Activated T-helper 1 cell treated with anti-CD3 and anti-CD28 coated beads, Interleukin-12 subunit alpha, Interleukin-12 subunit beta, Interleukin-2, Interleukin-4 antibody, amounts not matched to agents 30 ng/mL and 10 ng/mL and 1 ng/mL, durations not matched to agents 14 hours and 24 hours and 36 hours (primary cell): ENCODE measurements at regions of chr10 and their contacts with region 1.

Region 1: DNA sequence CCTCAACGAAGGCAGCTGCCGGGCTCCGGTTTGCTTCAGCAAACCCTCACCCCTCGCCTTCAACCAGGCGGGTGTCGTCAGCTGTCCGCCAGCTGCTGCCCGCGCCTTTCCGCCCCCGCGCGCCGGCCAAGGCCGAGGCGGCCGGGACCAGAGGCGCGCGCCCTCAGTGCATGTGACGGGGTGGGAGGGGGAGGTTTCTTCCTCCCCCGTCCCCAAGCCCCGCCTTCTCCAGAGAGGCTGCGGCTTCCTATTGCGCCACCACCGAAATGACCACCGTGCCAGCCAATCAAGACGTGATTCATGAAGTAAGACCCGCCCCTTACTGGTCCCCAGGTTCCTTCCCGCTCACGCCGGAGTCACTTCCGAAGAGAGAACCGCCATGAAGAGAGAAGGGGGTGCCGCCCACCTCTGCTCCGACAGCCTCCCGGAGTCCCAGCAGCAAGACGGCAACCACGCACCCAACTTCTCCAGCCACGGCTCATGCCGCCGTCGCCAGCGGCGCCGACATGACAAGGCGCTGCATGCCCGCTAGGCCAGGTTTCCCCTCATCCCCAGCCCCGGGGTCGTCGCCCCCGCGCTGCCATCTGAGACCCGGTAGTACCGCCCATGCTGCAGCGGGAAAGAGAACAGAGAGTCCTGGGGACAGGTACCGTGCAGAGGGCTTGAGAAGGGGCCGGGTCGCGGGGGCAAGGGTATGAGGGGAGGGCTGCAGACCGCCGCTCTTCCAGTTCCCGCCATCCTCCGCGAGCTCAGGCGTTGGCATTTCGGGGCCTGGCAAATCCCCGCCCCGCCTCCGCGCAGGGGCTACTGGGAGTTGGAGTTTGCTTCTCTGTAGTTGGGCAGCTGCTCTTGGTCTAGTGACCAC is at the start of gene SLF2:
- DNase-seq: peak; percentile 94
- H3K4me3 Mint-ChIP-seq: peak within 1 kb of the TSS; percentile 97
- H3K27ac Mint-ChIP-seq: peak within 1 kb of the TSS; percentile 95
- H3K4me1 Mint-ChIP-seq: peaks cover 48% of the 10 kb centered on the region
- H3K27me3 Mint-ChIP-seq: no peaks in the 10 kb centered on the region
- total RNA-seq, gene SLF2: 33.4 and 36.1 TPM in 2 replicates

Region 2: DNA sequence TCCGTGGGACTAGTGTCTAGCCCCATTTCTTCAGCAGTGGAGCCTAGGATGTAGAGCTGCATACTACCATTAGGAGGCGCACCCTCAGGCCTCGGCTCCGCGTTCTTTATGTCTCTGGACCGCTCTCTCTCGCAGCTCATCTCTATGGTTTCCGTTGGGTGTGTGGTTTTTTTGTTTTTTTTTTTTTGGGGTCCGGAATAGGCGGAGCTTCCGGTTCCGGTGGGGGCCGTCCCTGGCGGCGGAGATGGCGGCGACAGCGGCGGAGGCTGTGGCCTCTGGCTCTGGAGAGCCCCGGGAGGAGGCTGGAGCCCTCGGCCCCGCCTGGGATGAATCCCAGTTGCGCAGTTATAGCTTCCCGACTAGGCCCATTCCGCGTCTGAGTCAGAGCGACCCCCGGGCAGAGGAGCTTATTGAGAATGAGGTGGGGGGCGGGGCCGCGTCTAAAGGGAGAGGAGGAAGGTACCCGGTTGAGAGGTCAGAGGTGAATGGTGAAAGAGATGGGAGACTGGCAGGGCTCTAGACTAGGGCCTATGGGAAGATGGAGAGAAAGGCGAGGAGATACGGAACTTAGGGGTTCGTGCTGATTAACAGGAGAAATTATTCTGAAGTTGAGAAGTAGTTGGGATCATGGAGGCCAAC is 377.0 kb before region 1 on chr10 and contains the start of gene HIF1AN:
- intact Hi-C with region 1: loop called (anchors 1 kb)
- DNase-seq: peak; percentile 90
- H3K4me3 Mint-ChIP-seq: no peak within 1 kb of the TSS
- H3K27ac Mint-ChIP-seq: no peak within 1 kb of the TSS
- H3K4me1 Mint-ChIP-seq: peaks cover 16% of the 10 kb centered on the region
- H3K27me3 Mint-ChIP-seq: no peaks in the 10 kb centered on the region
- total RNA-seq, gene HIF1AN: 46.5 and 54.1 TPM in 2 replicates

Region 3: GRCh38 chr10:100998991-100999741 is 86.3 kb after region 1 on chr10:
- intact Hi-C with region 1: loop called (anchors 1 kb)
- DNase-seq: peak; percentile 77
- H3K4me3 Mint-ChIP-seq: peak overlapping the region; percentile 88
- H3K27ac Mint-ChIP-seq: peak overlapping the region; percentile 93
- H3K4me1 Mint-ChIP-seq: peaks cover 29% of the 10 kb centered on the region
- H3K27me3 Mint-ChIP-seq: peaks cover 4% of the 10 kb centered on the region

Region 4: GRCh38 chr10:101031128-101031795 is 118.4 kb after region 1 on chr10 and contains the starts of genes PDZD7 and SFXN3:
- intact Hi-C with region 1: loop called (anchors 1 kb)
- DNase-seq: peak; percentile 94
- H3K4me3 Mint-ChIP-seq: peak within 1 kb of the TSS; percentile 84
- H3K27ac Mint-ChIP-seq: peak within 1 kb of the TSS; percentile 94
- H3K4me1 Mint-ChIP-seq: peaks cover 27% of the 10 kb centered on the region
- H3K27me3 Mint-ChIP-seq: peaks cover 21% of the 10 kb centered on the region
- total RNA-seq, gene PDZD7: 0.47 and 0.54 TPM in 2 replicates
- total RNA-seq, gene SFXN3: 34.8 and 39.0 TPM in 2 replicates

Region 5: DNA sequence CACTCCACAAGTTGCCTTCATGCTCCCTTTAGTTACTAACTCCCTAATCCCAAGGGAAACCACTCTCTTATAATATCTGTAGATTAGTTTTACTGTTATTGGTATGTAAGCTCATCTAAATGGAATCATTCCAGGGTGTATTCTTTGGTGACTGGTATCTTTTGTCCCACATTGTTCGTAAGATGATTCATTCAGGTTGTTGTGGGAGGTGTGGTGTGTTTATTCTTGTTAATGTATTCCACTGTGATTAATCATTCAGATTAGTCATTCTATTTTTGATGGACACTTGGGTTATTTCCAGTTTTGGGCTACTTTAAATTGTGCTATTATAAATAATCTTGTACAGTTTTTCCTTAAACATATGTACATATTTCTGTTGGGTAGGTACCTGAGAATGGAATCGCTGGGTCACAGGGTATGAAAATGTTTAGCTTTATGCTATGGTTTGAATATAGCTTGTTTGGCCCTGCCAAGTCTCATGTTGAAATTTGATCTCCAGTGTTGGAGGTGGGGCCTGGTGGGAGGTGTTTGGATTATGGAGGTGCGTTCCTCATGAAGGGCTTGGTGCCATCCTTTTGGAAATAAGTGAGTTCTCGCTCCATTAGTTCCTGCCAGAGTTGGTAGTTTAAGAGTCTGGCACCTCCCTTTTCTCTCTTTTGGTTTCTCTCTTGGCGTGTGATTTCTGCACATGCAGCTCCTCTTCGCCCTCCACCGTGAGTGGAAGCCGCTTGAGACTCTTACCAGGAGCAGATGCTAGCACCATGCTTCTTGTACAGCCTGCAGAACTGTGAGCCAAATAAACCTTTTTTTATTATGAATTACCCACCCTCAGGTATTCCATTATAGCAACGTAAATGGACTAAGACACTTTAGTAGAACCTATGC is 455.0 kb after region 1 on chr10:
- intact Hi-C with region 1: no loop called
- DNase-seq: no peak
- H3K4me3 Mint-ChIP-seq: no peak overlapping the region
- H3K27ac Mint-ChIP-seq: peak overlapping the region; percentile 29
- H3K4me1 Mint-ChIP-seq: peaks cover 11% of the 10 kb centered on the region
- H3K27me3 Mint-ChIP-seq: no peaks in the 10 kb centered on the region